ENCODE measurements at regions of chr2 and their contacts with region 1.

Region 1: GRCh38 chr2:73985308-73986084 is 786 bp downstream of the TET3 start:
- DNase-seq: peak; percentile 83
- ATAC-seq: peak; percentile 47
- H3K4me3 Mint-ChIP-seq: peak overlapping the region; percentile 87
- H3K27ac Mint-ChIP-seq: peak overlapping the region; percentile 73
- H3K4me1 Mint-ChIP-seq: peaks cover 71% of the 10 kb centered on the region
- H3K27me3 Mint-ChIP-seq: no peaks in the 10 kb centered on the region

Region 2: GRCh38 chr2:73561422-73561821 is 424.1 kb before region 1 on chr2:
- CTCF ChIA-PET with region 1: no interaction called
- POLR2A ChIA-PET with region 1: no interaction called
- intact Hi-C with region 1: no loop called
- DNase-seq: no peak
- ATAC-seq: no peak
- H3K4me3 Mint-ChIP-seq: no peak overlapping the region
- H3K27ac Mint-ChIP-seq: no peak overlapping the region
- H3K4me1 Mint-ChIP-seq: no peaks in the 10 kb centered on the region
- H3K27me3 Mint-ChIP-seq: no peaks in the 10 kb centered on the region

Region 3: GRCh38 chr2:73851274-73851673 is 134.2 kb before region 1 on chr2:
- CTCF ChIA-PET with region 1: no interaction called
- POLR2A ChIA-PET with region 1: no interaction called
- intact Hi-C with region 1: loop called in 1 of 2 experiments (anchors 10 kb)
- DNase-seq: no peak
- ATAC-seq: peak; percentile 40
- H3K4me3 Mint-ChIP-seq: no peak overlapping the region
- H3K27ac Mint-ChIP-seq: peak overlapping the region; percentile 72
- H3K4me1 Mint-ChIP-seq: peaks cover 7% of the 10 kb centered on the region
- H3K27me3 Mint-ChIP-seq: no peaks in the 10 kb centered on the region

Region 4: DNA sequence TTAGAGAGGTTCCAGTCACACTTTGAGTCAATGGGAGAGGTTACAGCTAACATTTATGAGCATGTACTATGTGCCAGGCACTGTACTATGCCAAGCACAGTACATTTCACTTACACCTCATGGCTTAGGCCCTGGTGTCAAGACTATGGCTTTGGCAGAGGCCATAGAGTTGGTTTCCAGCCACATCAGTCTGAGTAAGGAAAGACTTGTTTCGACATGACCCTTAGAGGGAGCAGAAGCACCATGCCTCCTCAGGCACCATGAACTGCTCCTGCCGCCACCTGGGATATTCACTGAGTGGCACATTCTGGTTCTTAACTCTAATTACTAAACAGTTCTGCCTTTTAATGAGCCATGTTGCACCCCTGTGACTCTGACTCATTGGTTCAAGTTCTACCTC is 46.1 kb before region 1 on chr2:
- CTCF ChIA-PET with region 1: interaction called, 10 read pairs
- POLR2A ChIA-PET with region 1: no interaction called
- intact Hi-C with region 1: loop called in 1 of 2 experiments (anchors 2 kb)
- DNase-seq: peak; percentile 59
- ATAC-seq: peak; percentile 78
- H3K4me3 Mint-ChIP-seq: no peak overlapping the region
- H3K27ac Mint-ChIP-seq: peak overlapping the region; percentile 71
- H3K4me1 Mint-ChIP-seq: peaks cover 82% of the 10 kb centered on the region
- H3K27me3 Mint-ChIP-seq: no peaks in the 10 kb centered on the region

Region 5: DNA sequence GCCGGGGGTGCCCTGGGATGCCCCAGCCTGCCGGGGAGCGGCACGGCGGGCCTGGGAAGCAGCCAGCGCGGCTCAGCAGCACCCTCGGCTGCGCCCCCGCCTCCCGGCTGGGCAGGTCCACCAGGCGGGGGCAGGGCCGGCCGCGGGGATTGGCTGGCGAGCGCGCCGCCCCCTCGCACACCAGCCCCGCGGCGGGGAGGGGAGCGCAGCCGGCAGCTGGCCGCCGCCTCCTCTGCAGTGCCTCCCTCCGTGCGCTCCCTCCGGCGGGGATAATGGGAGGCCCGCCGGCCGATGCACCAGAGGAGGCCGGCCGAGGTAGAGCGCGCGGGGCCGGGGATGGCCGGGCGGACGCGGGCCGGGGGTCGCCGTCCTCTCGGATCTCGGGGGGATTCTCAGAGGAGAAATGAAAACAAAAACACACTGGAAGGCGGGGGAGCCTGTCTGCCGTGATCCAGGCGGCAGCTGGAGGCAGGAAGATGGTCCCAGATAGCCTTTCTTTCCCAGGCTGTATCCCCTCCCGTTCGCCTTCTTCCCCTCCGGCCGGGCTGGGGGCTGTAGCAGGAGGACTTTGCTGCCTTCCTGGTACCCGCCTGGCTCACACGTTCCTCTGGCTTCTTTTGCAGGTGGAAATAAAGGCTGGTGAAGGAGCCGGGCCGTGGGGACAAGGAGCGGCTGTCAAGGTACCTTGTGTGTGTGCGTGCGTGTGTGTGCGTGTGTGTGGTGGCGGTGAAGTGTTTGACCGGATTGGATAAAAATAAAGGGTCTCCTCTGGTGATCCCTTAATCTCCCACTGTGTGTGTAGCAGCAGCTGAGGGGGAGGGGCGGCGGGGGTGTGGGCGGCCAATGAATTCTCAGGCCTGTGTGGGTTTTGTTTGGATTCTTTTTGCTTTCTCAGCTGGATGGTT is 17.2 kb after region 1 on chr2:
- CTCF ChIA-PET with region 1: interaction called, 16 read pairs
- POLR2A ChIA-PET with region 1: interaction called, 7 read pairs
- intact Hi-C with region 1: loop called (anchors 1 kb)
- DNase-seq: peak; percentile 89
- ATAC-seq: peak; percentile 81
- H3K4me3 Mint-ChIP-seq: peak overlapping the region; percentile 77
- H3K27ac Mint-ChIP-seq: peak overlapping the region; percentile 71
- H3K4me1 Mint-ChIP-seq: peaks cover 81% of the 10 kb centered on the region
- H3K27me3 Mint-ChIP-seq: no peaks in the 10 kb centered on the region

Region 6: GRCh38 chr2:74031221-74031620 is 45.7 kb after region 1 on chr2:
- CTCF ChIA-PET with region 1: interaction called, 3 read pairs
- POLR2A ChIA-PET with region 1: no interaction called
- intact Hi-C with region 1: loop called (anchors 2 to 5 kb)
- DNase-seq: no peak
- ATAC-seq: no peak
- H3K4me3 Mint-ChIP-seq: peak overlapping the region; percentile 67
- H3K27ac Mint-ChIP-seq: peak overlapping the region; percentile 85
- H3K4me1 Mint-ChIP-seq: peaks cover 73% of the 10 kb centered on the region
- H3K27me3 Mint-ChIP-seq: no peaks in the 10 kb centered on the region

Region 7: DNA sequence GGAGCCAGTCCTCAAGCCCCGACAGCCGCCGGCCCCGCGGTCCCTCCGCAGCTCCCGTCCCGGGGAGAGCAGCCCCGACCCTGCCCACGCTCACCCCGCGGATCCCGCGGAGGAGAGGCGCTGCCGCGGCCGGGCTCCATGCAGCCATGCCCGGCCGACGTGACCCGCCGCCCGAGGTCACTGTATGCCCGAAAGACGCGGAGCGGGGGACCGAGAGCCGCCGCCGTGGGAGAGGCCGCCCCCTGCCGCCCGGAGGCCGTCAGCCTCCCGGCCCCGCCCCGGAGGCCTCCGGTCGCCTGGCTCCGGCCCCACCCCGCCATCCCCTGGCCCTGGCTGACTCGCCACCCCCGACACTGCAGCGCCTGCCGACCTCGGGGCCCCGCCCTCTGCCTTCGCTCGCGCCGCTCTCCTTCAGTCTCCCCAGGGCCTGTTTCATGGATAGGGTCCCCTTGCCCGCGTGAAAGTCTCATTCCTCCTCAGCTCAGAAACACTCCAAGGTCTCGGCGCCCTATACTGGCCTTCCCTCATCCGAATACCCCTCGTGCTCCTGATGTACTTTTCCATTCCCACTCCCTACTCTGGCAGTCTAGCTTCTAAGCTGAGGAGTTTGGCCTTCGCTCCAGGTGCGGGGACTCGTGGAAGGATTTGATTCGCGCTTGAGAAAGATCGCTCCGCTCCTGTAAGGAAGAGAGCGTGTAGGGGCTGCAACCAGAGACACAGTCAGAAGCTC is 162.4 kb after region 1 on chr2 and contains the start of gene BOLA3:
- CTCF ChIA-PET with region 1: no interaction called
- POLR2A ChIA-PET with region 1: no interaction called
- intact Hi-C with region 1: loop called (anchors 1 to 5 kb)
- DNase-seq: peak; percentile 94
- ATAC-seq: peak; percentile 94
- H3K4me3 Mint-ChIP-seq: no peak within 1 kb of the TSS
- H3K27ac Mint-ChIP-seq: no peak within 1 kb of the TSS
- H3K4me1 Mint-ChIP-seq: peaks cover 5% of the 10 kb centered on the region
- H3K27me3 Mint-ChIP-seq: no peaks in the 10 kb centered on the region
- total RNA-seq, gene BOLA3: 119 to 130 TPM

Region 8: DNA sequence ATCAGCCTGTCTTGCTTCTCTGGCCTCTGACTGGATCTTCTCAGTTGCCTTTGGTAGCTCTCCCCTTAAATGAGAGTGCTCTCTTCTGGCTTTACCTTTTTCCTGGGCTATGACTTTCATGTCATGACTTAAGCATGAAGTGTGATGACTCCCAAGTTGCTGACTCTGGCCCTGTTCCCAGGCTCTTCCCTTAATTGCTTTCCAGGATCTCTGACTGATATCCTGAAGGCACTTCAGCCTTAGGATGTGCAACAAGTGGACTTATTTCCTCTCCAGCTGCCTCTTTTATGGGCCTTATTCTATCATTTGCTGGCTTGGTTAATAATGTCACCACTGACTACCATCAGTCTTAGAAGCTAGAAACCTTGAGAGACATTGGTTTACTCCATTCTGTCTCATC is 686.0 kb after region 1 on chr2:
- CTCF ChIA-PET with region 1: no interaction called
- POLR2A ChIA-PET with region 1: no interaction called
- intact Hi-C with region 1: no loop called
- DNase-seq: no peak
- ATAC-seq: no peak
- H3K4me3 Mint-ChIP-seq: no peak overlapping the region
- H3K27ac Mint-ChIP-seq: no peak overlapping the region
- H3K4me1 Mint-ChIP-seq: no peaks in the 10 kb centered on the region
- H3K27me3 Mint-ChIP-seq: no peaks in the 10 kb centered on the region

Region 9: DNA sequence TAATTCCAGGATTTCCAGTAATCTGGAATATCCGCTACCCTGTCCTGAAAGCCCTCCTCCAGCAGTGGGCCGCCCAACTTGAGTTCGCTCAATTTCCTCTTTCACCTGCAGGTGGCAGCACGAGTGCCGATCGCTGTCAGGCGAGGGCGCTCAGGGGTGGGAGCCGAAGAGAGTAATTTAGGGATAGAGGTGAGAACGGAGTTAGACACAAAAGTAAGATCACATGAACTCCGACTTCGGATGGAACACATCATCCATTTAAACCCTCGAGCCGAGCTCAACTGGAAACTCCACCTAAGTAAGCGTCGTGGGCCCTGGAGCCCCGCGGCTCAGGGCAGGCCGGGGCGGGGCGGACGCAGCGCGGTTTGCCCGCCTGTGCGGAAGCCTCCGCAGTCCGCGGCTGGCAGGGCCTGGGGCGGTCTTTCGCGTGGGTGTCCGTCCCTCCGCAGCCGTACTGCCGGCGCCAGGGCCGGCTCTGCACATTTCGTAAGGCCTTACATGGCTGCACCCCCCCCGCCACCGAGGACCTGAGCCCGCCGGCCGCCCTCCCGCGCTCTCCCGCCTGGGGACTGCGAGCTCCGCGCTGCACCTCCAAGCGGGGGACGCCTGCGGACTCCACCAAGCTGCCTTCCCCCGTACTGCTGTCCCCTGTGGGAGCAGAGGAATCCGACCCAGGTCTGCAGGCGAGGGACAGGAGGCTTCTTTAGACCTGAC is 729.7 kb after region 1 on chr2:
- CTCF ChIA-PET with region 1: no interaction called
- POLR2A ChIA-PET with region 1: no interaction called
- intact Hi-C with region 1: no loop called
- DNase-seq: peak; percentile 90
- ATAC-seq: peak; percentile 91
- H3K4me3 Mint-ChIP-seq: peak overlapping the region; percentile 77
- H3K27ac Mint-ChIP-seq: peak overlapping the region; percentile 45
- H3K4me1 Mint-ChIP-seq: peaks cover 7% of the 10 kb centered on the region
- H3K27me3 Mint-ChIP-seq: peaks cover 11% of the 10 kb centered on the region

Measured in activated CD4-positive, alpha-beta T cell treated with anti-CD3 and anti-CD28 coated beads for 36 hours (primary cell).